ENCODE measurements at regions of chr4 and their contacts with region 1.

Region 1: GRCh38 chr4:56799824-56800756 is 21.4 kb downstream of the SPINK2 start:
- DNase-seq: peak; percentile 93
- ATAC-seq: peak; percentile 97
- H3K4me3 Mint-ChIP-seq: peak overlapping the region; percentile 87
- H3K27ac Mint-ChIP-seq: peak overlapping the region; percentile 72
- H3K4me1 Mint-ChIP-seq: peaks cover 28% of the 10 kb centered on the region
- H3K27me3 Mint-ChIP-seq: no peaks in the 10 kb centered on the region
- CTCF ChIP-seq: peak; percentile 85

Region 2: DNA sequence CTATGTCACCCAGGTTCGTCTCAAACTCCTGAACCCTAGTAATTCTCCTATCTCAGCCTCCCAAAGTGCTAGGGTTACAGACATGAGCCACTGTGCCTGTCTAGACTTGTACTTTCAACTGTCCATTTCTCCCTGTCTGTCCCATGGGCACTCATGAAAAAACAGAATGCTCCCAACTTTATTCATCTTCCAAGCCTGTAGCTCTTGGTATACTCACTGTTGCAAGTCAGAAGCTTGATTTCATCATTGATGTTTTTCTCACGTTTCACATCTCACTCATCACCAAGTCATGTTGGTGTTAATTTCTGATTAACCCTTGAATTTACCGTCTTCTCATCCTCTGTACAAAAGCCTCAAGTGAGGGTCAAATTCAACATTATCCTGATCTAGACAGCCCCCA is 340.0 kb before region 1 on chr4:
- CTCF ChIA-PET with region 1: no interaction called
- POLR2A ChIA-PET with region 1: no interaction called
- intact Hi-C with region 1: no loop called
- DNase-seq: no peak
- ATAC-seq: no peak
- H3K4me3 Mint-ChIP-seq: no peak overlapping the region
- H3K27ac Mint-ChIP-seq: peak overlapping the region; percentile 85
- H3K4me1 Mint-ChIP-seq: peaks cover 37% of the 10 kb centered on the region
- H3K27me3 Mint-ChIP-seq: no peaks in the 10 kb centered on the region
- CTCF ChIP-seq: no peak

Region 3: DNA sequence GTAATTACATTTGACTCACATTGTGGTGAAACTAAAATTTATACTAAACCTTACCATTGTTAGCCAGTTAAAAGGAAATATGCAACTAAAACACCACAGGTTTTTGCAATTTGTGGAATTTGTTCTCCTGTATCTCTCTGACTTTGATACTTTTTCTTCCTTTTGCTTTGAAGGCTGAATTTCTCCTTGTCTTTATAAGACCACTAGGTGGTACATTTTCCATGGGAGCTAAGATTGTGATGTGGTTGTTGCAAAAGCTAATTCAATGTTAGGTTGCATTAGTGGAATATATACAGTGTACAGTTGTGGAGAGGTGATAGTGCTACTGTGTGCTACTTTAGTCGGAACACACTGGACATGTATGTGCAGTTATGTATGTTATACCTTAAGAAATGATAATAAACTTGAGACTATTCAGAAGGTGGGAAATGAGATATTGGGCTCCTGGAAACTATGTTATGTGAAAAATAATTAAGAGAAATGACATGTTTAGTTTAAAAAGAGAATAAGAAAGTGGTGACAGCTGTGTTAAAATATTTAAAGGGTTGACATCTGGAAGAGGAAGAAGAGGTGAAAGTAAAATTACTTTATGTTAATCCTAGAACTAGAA is 224.2 kb before region 1 on chr4:
- CTCF ChIA-PET with region 1: interaction called, 10 read pairs
- POLR2A ChIA-PET with region 1: no interaction called
- intact Hi-C with region 1: loop called (anchors 10 kb)
- DNase-seq: no peak
- ATAC-seq: no peak
- H3K4me3 Mint-ChIP-seq: no peak overlapping the region
- H3K27ac Mint-ChIP-seq: no peak overlapping the region
- H3K4me1 Mint-ChIP-seq: peaks cover 3% of the 10 kb centered on the region
- H3K27me3 Mint-ChIP-seq: no peaks in the 10 kb centered on the region
- CTCF ChIP-seq: peak; percentile 29

Region 4: DNA sequence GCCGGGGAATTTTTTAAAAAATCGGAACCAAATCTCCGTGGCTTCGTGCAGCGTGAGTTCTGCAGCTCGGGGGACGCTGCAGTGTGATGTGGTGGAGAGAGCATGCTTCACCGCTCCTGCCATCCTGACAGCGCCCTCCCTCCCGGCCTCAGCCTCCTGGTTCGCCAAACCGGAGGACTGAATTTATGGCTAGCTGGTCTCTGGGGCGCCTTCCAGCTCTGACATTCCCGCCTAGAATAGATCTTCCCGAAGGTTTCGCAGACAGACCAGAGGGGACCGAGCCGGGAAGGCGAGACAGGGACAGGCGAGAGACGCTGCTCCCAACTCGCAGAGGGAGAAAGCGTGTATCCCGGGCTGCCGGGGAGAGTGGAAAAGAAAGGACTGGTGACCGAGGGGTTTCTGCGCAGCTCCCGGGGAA is 144.9 kb before region 1 on chr4:
- CTCF ChIA-PET with region 1: interaction called, 6 read pairs
- POLR2A ChIA-PET with region 1: interaction called, 3 read pairs
- intact Hi-C with region 1: loop called (anchors 5 kb)
- DNase-seq: no peak
- ATAC-seq: no peak
- H3K4me3 Mint-ChIP-seq: peak overlapping the region; percentile 84
- H3K27ac Mint-ChIP-seq: peak overlapping the region; percentile 82
- H3K4me1 Mint-ChIP-seq: peaks cover 61% of the 10 kb centered on the region
- H3K27me3 Mint-ChIP-seq: peaks cover 23% of the 10 kb centered on the region
- CTCF ChIP-seq: no peak

Region 5: GRCh38 chr4:56681158-56681852 is 118.8 kb before region 1 on chr4 and contains the start of gene HOPX:
- CTCF ChIA-PET with region 1: interaction called, 3 read pairs
- POLR2A ChIA-PET with region 1: interaction called, 3 read pairs
- intact Hi-C with region 1: loop called (anchors 10 kb)
- DNase-seq: peak; percentile 90
- ATAC-seq: peak; percentile 91
- H3K4me3 Mint-ChIP-seq: no peak within 1 kb of the TSS
- H3K27ac Mint-ChIP-seq: peak within 1 kb of the TSS; percentile 47
- H3K4me1 Mint-ChIP-seq: peaks cover 25% of the 10 kb centered on the region
- H3K27me3 Mint-ChIP-seq: peaks cover 18% of the 10 kb centered on the region
- CTCF ChIP-seq: no peak
- total RNA-seq, gene HOPX: 55.8 to 58.7 TPM

Region 6: DNA sequence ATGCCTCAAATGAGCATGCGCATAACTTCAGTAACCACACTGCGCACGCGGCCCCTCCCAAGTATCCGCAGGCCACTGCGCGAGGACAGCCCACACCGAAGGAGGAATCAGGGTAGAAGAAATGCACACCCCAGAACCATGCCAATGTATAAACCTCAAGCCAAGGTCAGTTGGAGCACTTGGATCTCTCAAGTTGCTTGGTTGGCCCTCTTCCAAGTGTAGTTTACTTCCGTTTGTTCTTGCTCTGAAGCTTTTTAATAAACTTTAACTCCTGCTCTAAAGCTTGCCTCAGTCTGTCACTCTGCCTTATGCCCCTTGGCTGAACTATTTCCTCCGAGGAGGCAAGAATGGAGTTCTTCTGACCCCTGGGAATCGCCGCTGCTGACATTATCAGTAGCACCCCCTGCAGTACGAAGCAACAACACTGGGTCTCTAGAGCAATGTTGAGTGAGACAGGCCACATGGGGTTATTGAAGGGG is 43.4 kb after region 1 on chr4:
- CTCF ChIA-PET with region 1: interaction called, 58 read pairs
- POLR2A ChIA-PET with region 1: no interaction called
- intact Hi-C with region 1: no loop called
- DNase-seq: no peak
- ATAC-seq: no peak
- H3K4me3 Mint-ChIP-seq: no peak overlapping the region
- H3K27ac Mint-ChIP-seq: no peak overlapping the region
- H3K4me1 Mint-ChIP-seq: no peaks in the 10 kb centered on the region
- H3K27me3 Mint-ChIP-seq: no peaks in the 10 kb centered on the region
- CTCF ChIP-seq: no peak

Measured in activated CD8-positive, alpha-beta T cell treated with anti-CD3 and anti-CD28 coated beads for 36 hours (primary cell).